Activated T-helper 2 cell treated with anti-CD3 and anti-CD28 coated beads, Interferon-gamma antibody, Interleukin-2, Interleukin-4, amounts not matched to agents 10 μg/mL and 5 μg/mL and 100 μg/mL, durations not matched to agents 14 hours and 24 hours and 36 hours (primary cell): ENCODE measurements at regions of chr4 and their contacts with region 1.

Region 1: GRCh38 chr4:36325499-36325898 is 44.1 kb downstream of the DTHD1 start:
- DNase-seq: no peak
- H3K4me3 Mint-ChIP-seq: no peak overlapping the region
- H3K27ac Mint-ChIP-seq: peak overlapping the region; percentile 63
- H3K4me1 Mint-ChIP-seq: peaks cover 62% of the 10 kb centered on the region
- H3K27me3 Mint-ChIP-seq: no peaks in the 10 kb centered on the region

Region 2: GRCh38 chr4:36081185-36081584 is 244.3 kb before region 1 on chr4:
- intact Hi-C with region 1: loop called (anchors 2 kb)
- DNase-seq: no peak
- H3K4me3 Mint-ChIP-seq: no peak overlapping the region
- H3K27ac Mint-ChIP-seq: no peak overlapping the region
- H3K4me1 Mint-ChIP-seq: peaks cover 12% of the 10 kb centered on the region
- H3K27me3 Mint-ChIP-seq: no peaks in the 10 kb centered on the region

Region 3: GRCh38 chr4:36115312-36115711 is 210.2 kb before region 1 on chr4:
- intact Hi-C with region 1: no loop called
- DNase-seq: no peak
- H3K4me3 Mint-ChIP-seq: no peak overlapping the region
- H3K27ac Mint-ChIP-seq: no peak overlapping the region
- H3K4me1 Mint-ChIP-seq: no peaks in the 10 kb centered on the region
- H3K27me3 Mint-ChIP-seq: no peaks in the 10 kb centered on the region

Region 4: DNA sequence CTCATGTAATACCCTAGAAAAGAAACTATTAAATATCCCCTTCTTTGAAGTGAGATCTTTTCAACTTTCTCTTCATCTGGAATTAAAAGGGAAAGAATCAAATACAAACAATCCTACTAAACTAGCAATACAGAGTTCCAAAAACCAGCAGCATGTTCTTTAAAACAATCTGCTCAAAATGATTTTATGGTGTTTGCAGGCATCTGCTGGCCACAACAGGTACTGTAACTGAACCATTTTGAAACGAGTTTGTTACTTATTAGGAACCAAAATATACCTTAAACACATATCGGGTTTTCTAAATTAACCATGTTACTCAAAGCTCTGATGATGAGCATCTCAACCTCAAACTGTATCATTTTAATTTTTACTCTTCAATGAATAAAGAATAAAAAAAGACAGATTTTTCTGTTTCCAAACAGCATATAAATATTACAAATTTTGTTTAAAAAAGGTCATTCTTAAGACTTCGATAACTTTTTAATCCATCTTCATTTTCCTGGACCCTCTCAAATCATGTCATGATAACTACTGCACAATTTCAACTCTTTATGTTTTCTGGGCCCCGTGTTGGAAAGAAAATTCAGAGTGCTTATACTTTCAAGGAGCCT is 137.7 kb before region 1 on chr4:
- intact Hi-C with region 1: loop called (anchors 5 kb)
- DNase-seq: no peak
- H3K4me3 Mint-ChIP-seq: no peak overlapping the region
- H3K27ac Mint-ChIP-seq: no peak overlapping the region
- H3K4me1 Mint-ChIP-seq: peaks cover 39% of the 10 kb centered on the region
- H3K27me3 Mint-ChIP-seq: no peaks in the 10 kb centered on the region

Region 5: GRCh38 chr4:36255577-36255976 is 69.9 kb before region 1 on chr4:
- intact Hi-C with region 1: loop called (anchors 1 kb)
- DNase-seq: peak; percentile 57
- H3K4me3 Mint-ChIP-seq: peak overlapping the region; percentile 64
- H3K27ac Mint-ChIP-seq: peak overlapping the region; percentile 90
- H3K4me1 Mint-ChIP-seq: peaks cover 45% of the 10 kb centered on the region
- H3K27me3 Mint-ChIP-seq: no peaks in the 10 kb centered on the region

Region 6: GRCh38 chr4:36285784-36286480 is 39.6 kb before region 1 on chr4:
- intact Hi-C with region 1: loop called (anchors 1 kb)
- DNase-seq: peak; percentile 72
- H3K4me3 Mint-ChIP-seq: peak overlapping the region; percentile 45
- H3K27ac Mint-ChIP-seq: peak overlapping the region; percentile 91
- H3K4me1 Mint-ChIP-seq: peaks cover 64% of the 10 kb centered on the region
- H3K27me3 Mint-ChIP-seq: no peaks in the 10 kb centered on the region

Region 7: GRCh38 chr4:36394352-36394903 is 68.9 kb after region 1 on chr4:
- intact Hi-C with region 1: loop called (anchors 1 kb)
- DNase-seq: peak; percentile 47
- H3K4me3 Mint-ChIP-seq: peak overlapping the region; percentile 69
- H3K27ac Mint-ChIP-seq: peak overlapping the region; percentile 97
- H3K4me1 Mint-ChIP-seq: peaks cover 26% of the 10 kb centered on the region
- H3K27me3 Mint-ChIP-seq: peaks cover 17% of the 10 kb centered on the region

Region 8: DNA sequence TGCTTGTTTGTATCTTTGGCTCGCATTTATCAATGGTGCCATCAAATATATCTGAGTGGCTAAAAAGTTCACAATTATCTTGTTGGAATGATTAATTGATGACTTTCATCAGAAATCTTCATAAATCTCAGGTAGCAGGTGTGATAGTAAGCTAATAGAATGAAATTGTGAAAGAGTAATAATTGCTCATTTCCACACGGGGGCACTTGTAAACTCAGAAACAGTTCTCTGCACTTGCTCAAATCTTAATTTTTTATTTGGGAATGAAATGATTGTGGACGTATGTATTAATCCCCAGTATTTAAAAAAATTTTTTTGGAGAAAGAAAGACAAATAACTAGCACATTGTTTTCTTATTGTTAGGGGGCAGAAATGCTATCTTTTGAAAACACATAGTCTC is 88.7 kb after region 1 on chr4:
- intact Hi-C with region 1: no loop called
- DNase-seq: no peak
- H3K4me3 Mint-ChIP-seq: no peak overlapping the region
- H3K27ac Mint-ChIP-seq: no peak overlapping the region
- H3K4me1 Mint-ChIP-seq: no peaks in the 10 kb centered on the region
- H3K27me3 Mint-ChIP-seq: peaks cover 33% of the 10 kb centered on the region